ENCODE measurements at regions of chr6 and their contacts with region 1.

Region 1: GRCh38 chr6:155120034-155120433 is 124.9 kb downstream of the TIAM2 start:
- DNase-seq: peak; percentile 36 to 52
- H3K4me3 ChIP-seq: no peak overlapping the region
- H3K4me3 Mint-ChIP-seq: no peak overlapping the region
- H3K27ac Mint-ChIP-seq: peak overlapping the region; percentile 63
- H3K4me1 ChIP-seq: peaks cover 10% of the 10 kb centered on the region
- H3K4me1 Mint-ChIP-seq: peaks cover 25% of the 10 kb centered on the region
- H3K27me3 ChIP-seq: no peaks in the 10 kb centered on the region
- H3K27me3 Mint-ChIP-seq: no peaks in the 10 kb centered on the region
- CTCF ChIP-seq: no peak

Region 2: GRCh38 chr6:155085582-155086257 is 34.3 kb before region 1 on chr6:
- CTCF ChIA-PET with region 1: no interaction called
- POLR2A ChIA-PET with region 1: no interaction called
- intact Hi-C with region 1: loop called (anchors 1 kb)
- DNase-seq: peak; percentile 64 to 83
- H3K4me3 ChIP-seq: no peak overlapping the region
- H3K4me3 Mint-ChIP-seq: peak overlapping the region; percentile 27
- H3K27ac Mint-ChIP-seq: peak overlapping the region; percentile 87
- H3K4me1 ChIP-seq: peaks cover 23% of the 10 kb centered on the region
- H3K4me1 Mint-ChIP-seq: peaks cover 11% of the 10 kb centered on the region
- H3K27me3 ChIP-seq: no peaks in the 10 kb centered on the region
- H3K27me3 Mint-ChIP-seq: no peaks in the 10 kb centered on the region
- CTCF ChIP-seq: no peak

Region 3: GRCh38 chr6:155154158-155154830 is 34.3 kb after region 1 on chr6:
- CTCF ChIA-PET with region 1: no interaction called
- POLR2A ChIA-PET with region 1: no interaction called
- intact Hi-C with region 1: loop called (anchors 2 kb)
- DNase-seq: no peak
- H3K4me3 ChIP-seq: no peak overlapping the region
- H3K4me3 Mint-ChIP-seq: no peak overlapping the region
- H3K27ac Mint-ChIP-seq: no peak overlapping the region
- H3K4me1 ChIP-seq: peaks cover 18% of the 10 kb centered on the region
- H3K4me1 Mint-ChIP-seq: peaks cover 22% of the 10 kb centered on the region
- H3K27me3 ChIP-seq: no peaks in the 10 kb centered on the region
- H3K27me3 Mint-ChIP-seq: no peaks in the 10 kb centered on the region
- CTCF ChIP-seq: no peak

Measured in Caco-2 (cell line).